ENCODE measurements at regions of chr6 and their contacts with region 1.

Region 1: GRCh38 chr6:30102970-30103874 is 9.7 kb downstream of the TRIM31 start:
- DNase-seq: peak; percentile 89
- CTCF ChIP-seq: peak; percentile 98

Region 2: DNA sequence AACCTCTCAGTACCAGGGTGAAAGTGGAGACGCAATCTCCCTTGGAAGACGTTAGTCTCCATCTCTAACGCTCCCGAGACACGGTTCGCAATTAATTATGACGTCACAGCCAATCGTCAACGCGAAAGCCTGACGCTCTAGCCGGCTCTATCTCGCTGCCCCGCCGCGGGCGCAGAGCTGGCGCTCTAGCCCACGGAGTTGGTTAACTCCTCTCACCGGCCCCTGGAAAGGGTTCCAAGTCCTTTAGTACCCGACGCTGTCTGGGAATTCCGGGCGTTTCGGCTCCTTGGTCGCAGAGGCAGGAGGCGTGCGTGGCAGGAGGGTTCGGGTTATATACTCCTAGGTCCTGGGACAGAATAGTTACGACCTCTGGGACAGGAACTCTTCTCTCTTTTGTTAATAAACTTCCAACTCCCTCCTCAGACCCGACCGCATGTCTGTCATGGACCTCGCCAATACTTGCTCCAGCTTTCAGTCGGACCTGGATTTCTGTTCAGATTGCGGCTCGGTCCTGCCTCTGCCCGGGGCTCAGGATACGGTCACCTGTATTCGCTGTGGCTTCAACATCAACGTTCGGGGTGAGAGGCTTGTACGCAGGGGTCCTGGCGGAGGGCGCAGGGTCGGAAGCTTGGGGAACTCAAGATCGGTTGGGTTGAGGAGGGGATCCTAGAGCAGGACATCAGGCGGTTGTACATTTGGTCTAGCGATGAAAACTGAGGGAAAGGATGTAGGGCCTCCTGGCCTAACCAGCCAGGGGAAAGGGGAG is 41.9 kb before region 1 on chr6 and contains the start of gene POLR1H:
- CTCF ChIA-PET with region 1: interaction called, 11 read pairs
- POLR2A ChIA-PET with region 1: no interaction called
- DNase-seq: peak; percentile 92
- CTCF ChIP-seq: no peak

Region 3: GRCh38 chr6:30071081-30071818 is 32.0 kb before region 1 on chr6:
- CTCF ChIA-PET with region 1: interaction called, 10 read pairs
- POLR2A ChIA-PET with region 1: interaction called, 3 read pairs
- DNase-seq: peak; percentile 28
- CTCF ChIP-seq: peak; percentile 7

Region 4: GRCh38 chr6:30091577-30092381 is 11.4 kb before region 1 on chr6:
- CTCF ChIA-PET with region 1: interaction called, 58 read pairs
- POLR2A ChIA-PET with region 1: no interaction called
- DNase-seq: no peak
- CTCF ChIP-seq: no peak

Region 5: DNA sequence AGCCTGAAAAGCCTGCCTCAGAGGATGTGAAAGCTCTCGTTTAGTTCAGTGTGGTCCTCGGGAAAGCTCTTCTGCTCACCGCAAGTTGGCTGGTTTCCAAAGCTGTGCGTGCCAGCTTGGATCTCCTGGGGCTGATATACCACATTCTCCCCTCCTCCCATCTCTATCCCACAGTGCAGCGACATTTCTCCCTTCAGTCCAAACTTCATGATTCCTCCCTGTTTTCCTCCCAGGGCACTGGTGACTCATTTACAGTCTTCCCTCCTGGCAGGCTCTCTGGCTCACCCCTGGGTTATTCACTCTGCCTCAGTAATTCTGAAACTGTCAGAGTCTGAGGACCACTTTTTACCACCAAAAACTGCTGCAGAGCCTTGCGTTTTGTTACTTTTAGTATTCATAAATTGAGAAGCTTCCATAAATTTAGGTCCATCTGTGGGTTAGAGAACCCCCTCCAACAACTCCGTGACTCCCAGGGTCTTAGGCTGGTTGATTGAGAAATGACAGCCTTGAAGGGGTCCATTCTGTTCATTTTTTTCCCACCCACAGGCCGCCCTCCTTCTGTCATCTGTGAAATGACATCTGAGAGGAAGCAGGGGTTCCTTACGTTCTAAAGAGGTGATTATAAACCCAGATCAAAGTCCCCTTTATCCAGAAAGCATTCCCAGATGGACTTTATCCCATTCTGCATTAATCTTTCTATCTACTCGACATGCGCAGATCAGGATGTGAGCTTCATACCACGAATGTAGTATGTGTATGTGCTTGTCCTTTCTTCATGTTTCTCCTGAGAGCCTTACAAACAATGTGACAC is 51.7 kb after region 1 on chr6:
- CTCF ChIA-PET with region 1: interaction called, 11 read pairs
- POLR2A ChIA-PET with region 1: no interaction called
- DNase-seq: no peak
- CTCF ChIP-seq: no peak

Region 6: GRCh38 chr6:30169658-30170614 is 66.7 kb after region 1 on chr6:
- CTCF ChIA-PET with region 1: interaction called, 17 read pairs
- POLR2A ChIA-PET with region 1: no interaction called
- DNase-seq: peak; percentile 66
- CTCF ChIP-seq: peak; percentile 64

Region 7: GRCh38 chr6:30219244-30219643 is 116.0 kb after region 1 on chr6:
- CTCF ChIA-PET with region 1: interaction called, 12 read pairs
- POLR2A ChIA-PET with region 1: no interaction called
- DNase-seq: peak; percentile 71
- CTCF ChIP-seq: peak; percentile 86

Region 8: GRCh38 chr6:30565772-30566171 is 462.6 kb after region 1 on chr6:
- CTCF ChIA-PET with region 1: no interaction called
- POLR2A ChIA-PET with region 1: no interaction called
- DNase-seq: no peak
- CTCF ChIP-seq: no peak

Measured in GM10248 (cell line).